ENCODE measurements at regions of chr10 and their contacts with region 1.

Region 1: GRCh38 chr10:35126530-35127296 is at the start of gene CREM:
- DNase-seq: peak; percentile 98 to 99 (median 99)
- H3K4me3 ChIP-seq: peak within 1 kb of the TSS; percentile 77 to 95
- H3K4me3 Mint-ChIP-seq: peak within 1 kb of the TSS; percentile 85 to 94 (median 90)
- H3K27ac ChIP-seq: peak within 1 kb of the TSS; percentile 99
- H3K27ac Mint-ChIP-seq: peak within 1 kb of the TSS; percentile 95 to 99 (median 98)
- H3K4me1 ChIP-seq: peaks cover 44% of the 10 kb centered on the region
- H3K4me1 Mint-ChIP-seq: peaks cover 22 to 59% (median 33%) of the 10 kb centered on the region in 4 donors
- H3K27me3 ChIP-seq: no peaks in the 10 kb centered on the region
- H3K27me3 Mint-ChIP-seq: no peaks in the 10 kb centered on the region
- total RNA-seq, gene CREM: 17.8 to 22.3 TPM

Region 2: DNA sequence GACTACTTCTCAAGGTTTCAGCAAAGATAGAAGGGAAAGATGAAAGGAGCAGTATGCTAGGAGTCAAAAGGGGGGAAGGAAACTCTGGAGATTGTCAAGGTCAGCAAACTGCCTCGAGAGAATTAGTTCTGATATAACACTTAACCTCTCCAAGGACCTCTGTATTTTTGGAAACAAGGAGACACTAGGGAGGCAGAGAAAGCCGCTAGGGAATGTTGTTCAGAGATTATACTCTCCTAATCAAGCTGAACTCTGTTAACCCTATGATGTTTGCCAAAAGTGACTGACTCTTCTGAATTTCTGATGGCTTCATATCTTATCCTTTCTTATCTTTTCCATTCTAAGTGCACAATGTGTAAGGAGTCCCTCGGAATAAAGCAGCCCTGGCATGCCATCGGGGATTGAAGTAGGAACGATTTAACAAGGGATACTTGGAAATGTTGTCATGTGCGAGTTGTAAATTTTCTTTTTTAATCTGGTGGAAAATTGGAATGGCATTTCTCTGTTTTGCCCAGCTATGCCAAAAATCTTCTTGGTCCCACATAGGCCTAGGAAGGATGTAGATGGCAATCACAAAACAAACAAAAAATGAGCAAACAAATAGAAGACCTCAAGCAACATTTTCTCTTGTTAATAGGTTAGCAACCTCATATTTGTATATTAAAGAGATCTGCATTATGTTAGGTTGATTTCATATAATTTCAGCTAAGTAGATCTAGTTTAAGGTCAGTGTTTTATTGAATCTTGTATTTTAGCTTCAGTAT is 27.2 kb after region 1 on chr10:
- CTCF ChIA-PET with region 1: interaction called, 5 read pairs
- POLR2A ChIA-PET with region 1: interaction called, 31 read pairs
- intact Hi-C with region 1: loop called (anchors 1 kb)
- DNase-seq: no peak
- H3K4me3 ChIP-seq: no peak overlapping the region
- H3K4me3 Mint-ChIP-seq: no peak overlapping the region
- H3K27ac ChIP-seq: no peak overlapping the region
- H3K27ac Mint-ChIP-seq: peak overlapping the region in 2 of 7 donors; percentile 42 to 72
- H3K4me1 ChIP-seq: peaks cover 21% of the 10 kb centered on the region
- H3K4me1 Mint-ChIP-seq: peaks cover 16 to 35% (median 22%) of the 10 kb centered on the region in 4 donors
- H3K27me3 ChIP-seq: no peaks in the 10 kb centered on the region
- H3K27me3 Mint-ChIP-seq: no peaks in the 10 kb centered on the region

Region 3: DNA sequence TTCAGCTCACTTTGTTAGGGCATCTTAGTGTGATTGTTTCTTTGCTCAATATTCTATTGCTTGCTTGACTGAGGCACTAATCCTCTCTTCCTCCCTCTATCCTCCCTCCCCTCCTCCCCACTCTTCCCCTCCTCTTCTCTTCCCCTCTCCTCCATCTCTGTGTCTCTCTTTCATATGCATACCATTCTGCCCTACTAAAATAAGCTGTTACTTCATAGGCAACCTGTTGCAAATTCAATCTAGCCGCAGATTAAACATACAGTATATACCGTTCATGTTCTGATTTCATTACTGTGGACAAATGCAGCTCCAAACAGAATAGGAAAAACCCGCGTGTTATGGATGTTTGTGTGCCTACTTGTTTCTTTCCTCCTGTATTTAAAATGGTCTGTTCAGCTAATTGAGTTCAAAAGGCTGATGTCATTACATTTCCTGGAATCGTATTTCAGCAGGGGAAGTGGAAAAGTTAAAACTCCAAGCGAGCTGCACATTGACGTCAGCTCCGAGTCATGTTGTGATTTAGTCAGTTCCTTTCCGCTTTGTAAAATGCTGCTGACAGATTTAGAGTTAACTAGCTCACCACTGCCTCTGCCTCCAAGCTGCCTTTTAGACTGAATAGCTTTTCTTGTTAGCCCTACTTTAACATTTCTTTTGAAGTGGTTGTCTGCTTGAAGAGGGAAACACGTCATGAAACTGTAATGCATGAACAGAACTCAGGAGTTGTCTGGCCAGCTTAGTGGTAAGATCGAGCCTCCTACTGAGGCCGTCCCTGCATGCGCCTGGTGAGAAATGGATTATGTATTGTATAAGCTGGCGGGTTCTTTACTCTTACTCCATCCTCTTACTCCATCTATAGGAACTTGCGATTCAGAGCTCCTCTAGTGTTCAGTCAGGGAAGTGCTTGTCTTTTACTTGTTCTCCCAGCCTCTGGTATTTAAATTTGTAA is 68.9 kb after region 1 on chr10:
- CTCF ChIA-PET with region 1: interaction called, 242 read pairs
- POLR2A ChIA-PET with region 1: interaction called, 248 read pairs
- intact Hi-C with region 1: loop called (anchors 1 kb)
- DNase-seq: peak; percentile 88 to 97 (median 94)
- H3K4me3 ChIP-seq: peak overlapping the region; percentile 57 to 73
- H3K4me3 Mint-ChIP-seq: peak overlapping the region; percentile 75 to 91 (median 89)
- H3K27ac ChIP-seq: peak overlapping the region; percentile 93
- H3K27ac Mint-ChIP-seq: peak overlapping the region; percentile 91 to 100 (median 99)
- H3K4me1 ChIP-seq: peaks cover 25% of the 10 kb centered on the region
- H3K4me1 Mint-ChIP-seq: peaks cover 16 to 25% (median 17%) of the 10 kb centered on the region in 4 donors
- H3K27me3 ChIP-seq: no peaks in the 10 kb centered on the region
- H3K27me3 Mint-ChIP-seq: no peaks in the 10 kb centered on the region

Region 4: GRCh38 chr10:35218339-35218955 is 91.7 kb after region 1 on chr10:
- CTCF ChIA-PET with region 1: interaction called, 377 read pairs
- POLR2A ChIA-PET with region 1: interaction called, 25 read pairs
- intact Hi-C with region 1: loop called (anchors 1 kb)
- DNase-seq: peak; percentile 78 to 85 (median 79)
- H3K4me3 ChIP-seq: no peak overlapping the region
- H3K4me3 Mint-ChIP-seq: peak overlapping the region in 6 of 8 donors; percentile 41 to 73 (median 69)
- H3K27ac ChIP-seq: no peak overlapping the region
- H3K27ac Mint-ChIP-seq: peak overlapping the region; percentile 7 to 94 (median 92)
- H3K4me1 ChIP-seq: peaks cover 9% of the 10 kb centered on the region
- H3K4me1 Mint-ChIP-seq: peaks cover 6 to 8% (median 7%) of the 10 kb centered on the region in 4 donors
- H3K27me3 ChIP-seq: no peaks in the 10 kb centered on the region
- H3K27me3 Mint-ChIP-seq: peaks cover 0 to 16% of the 10 kb centered on the region in 2 donors

Region 5: GRCh38 chr10:35236739-35237138 is 110.0 kb after region 1 on chr10:
- CTCF ChIA-PET with region 1: no interaction called
- POLR2A ChIA-PET with region 1: no interaction called
- intact Hi-C with region 1: no loop called
- DNase-seq: no peak
- H3K4me3 ChIP-seq: no peak overlapping the region
- H3K4me3 Mint-ChIP-seq: no peak overlapping the region
- H3K27ac ChIP-seq: no peak overlapping the region
- H3K27ac Mint-ChIP-seq: no peak overlapping the region
- H3K4me1 ChIP-seq: no peaks in the 10 kb centered on the region
- H3K4me1 Mint-ChIP-seq: no peaks in the 10 kb centered on the region
- H3K27me3 ChIP-seq: no peaks in the 10 kb centered on the region
- H3K27me3 Mint-ChIP-seq: no peaks in the 10 kb centered on the region

Region 6: GRCh38 chr10:35447693-35448407 is 321.1 kb after region 1 on chr10:
- CTCF ChIA-PET with region 1: no interaction called
- POLR2A ChIA-PET with region 1: no interaction called
- intact Hi-C with region 1: loop called (anchors 10 kb)
- DNase-seq: peak; percentile 56 to 76 (median 67)
- H3K4me3 ChIP-seq: no peak overlapping the region
- H3K4me3 Mint-ChIP-seq: peak overlapping the region; percentile 60 to 94 (median 78)
- H3K27ac ChIP-seq: peak overlapping the region; percentile 59
- H3K27ac Mint-ChIP-seq: peak overlapping the region; percentile 93 to 98 (median 97)
- H3K4me1 ChIP-seq: peaks cover 73% of the 10 kb centered on the region
- H3K4me1 Mint-ChIP-seq: peaks cover 61 to 82% (median 68%) of the 10 kb centered on the region in 4 donors
- H3K27me3 ChIP-seq: no peaks in the 10 kb centered on the region
- H3K27me3 Mint-ChIP-seq: no peaks in the 10 kb centered on the region

Region 7: DNA sequence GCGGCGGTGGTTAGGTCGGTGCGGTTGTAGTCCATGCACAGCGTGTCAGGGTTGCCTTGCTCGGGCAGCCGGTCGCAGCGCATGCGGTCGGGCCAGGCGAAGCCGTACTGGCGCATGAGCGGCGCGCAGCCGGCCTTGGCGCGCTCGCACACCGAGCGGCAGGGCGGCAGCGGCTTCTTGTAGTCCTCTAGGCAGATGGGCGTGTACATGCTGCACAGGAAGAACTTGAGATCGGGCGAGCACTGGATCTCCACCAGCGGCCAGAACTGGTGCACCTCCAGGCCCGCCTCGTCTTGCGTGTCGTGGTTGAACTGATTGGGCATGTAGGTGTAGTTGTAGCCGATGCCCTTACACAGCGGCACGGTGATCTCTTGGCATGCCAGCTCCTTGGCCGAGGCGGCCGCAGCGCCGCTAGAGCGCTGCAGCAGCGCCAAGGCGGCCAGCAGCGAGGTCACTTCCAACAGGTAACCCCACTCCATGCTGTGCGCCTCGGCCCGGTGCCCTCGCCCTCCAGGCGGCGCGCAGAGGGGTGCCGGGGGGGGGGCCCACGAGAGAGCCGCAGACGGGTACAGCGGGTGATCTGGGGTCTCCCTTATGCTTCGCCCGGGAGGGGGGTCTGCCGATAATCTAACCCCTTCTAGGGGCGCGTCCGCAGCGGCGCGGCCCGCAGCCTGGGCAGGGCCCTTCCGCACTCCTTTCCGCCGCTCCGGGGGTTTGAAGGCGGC is 514.4 kb after region 1 on chr10:
- CTCF ChIA-PET with region 1: no interaction called
- POLR2A ChIA-PET with region 1: no interaction called
- intact Hi-C with region 1: loop called (anchors 2 kb)
- DNase-seq: peak; percentile 36 to 58 (median 50)
- H3K4me3 ChIP-seq: peak overlapping the region; percentile 29 to 51
- H3K4me3 Mint-ChIP-seq: peak overlapping the region; percentile 81 to 90 (median 86)
- H3K27ac ChIP-seq: no peak overlapping the region
- H3K27ac Mint-ChIP-seq: peak overlapping the region in 6 of 7 donors; percentile 12 to 67 (median 30)
- H3K4me1 ChIP-seq: peaks cover 34% of the 10 kb centered on the region
- H3K4me1 Mint-ChIP-seq: peaks cover 9 to 47% (median 18%) of the 10 kb centered on the region in 4 donors
- H3K27me3 ChIP-seq: peaks cover 25% of the 10 kb centered on the region
- H3K27me3 Mint-ChIP-seq: peaks cover 22 to 26% of the 10 kb centered on the region in 2 donors

Measured in CD4-positive, alpha-beta memory T cell (primary cell).